K562 (cell line): ENCODE measurements at regions of chrX and their contacts with region 1.

Region 1: DNA sequence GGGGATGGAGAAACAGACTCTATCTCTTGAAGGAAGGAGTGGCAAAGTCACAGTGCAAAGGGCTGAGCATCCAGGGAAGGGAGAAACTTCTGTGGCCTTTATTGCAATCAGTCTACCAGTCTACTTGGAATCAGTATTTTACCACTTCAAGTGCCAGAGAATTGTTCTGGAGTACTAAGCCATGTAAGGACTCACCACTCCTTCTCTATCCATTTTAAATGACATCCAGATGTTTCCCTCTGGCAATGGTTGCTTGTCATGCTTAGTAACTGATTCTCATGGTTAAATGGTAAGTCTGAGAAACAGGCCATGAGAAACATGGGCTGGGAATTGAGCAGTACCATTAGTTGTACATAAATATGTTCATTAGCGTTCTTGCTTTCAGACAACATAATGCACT is 21.1 kb upstream of the SMIM10 start:
- DNase-seq: no peak
- ATAC-seq: no peak
- H3K4me3 ChIP-seq: no peak overlapping the region
- H3K27ac ChIP-seq: no peak overlapping the region
- H3K4me1 ChIP-seq: peaks cover 0 to 9% of the 10 kb centered on the region in 2 experiments; a peak in 3 of 5 replicates
- H3K27me3 ChIP-seq: no peaks in the 10 kb centered on the region
- CTCF ChIP-seq: no peak
- EP300 ChIP-seq: no peak
- POLR2A ChIP-seq: no peak
- RAD21 ChIP-seq: no peak

Region 2: GRCh38 chrX:134898440-134898839 is 71.3 kb before region 1 on chrX:
- CTCF ChIA-PET with region 1: no interaction called
- POLR2A ChIA-PET with region 1: no interaction called
- in situ Hi-C with region 1: no loop called
- intact Hi-C with region 1: no loop called
- DNase-seq: no peak
- ATAC-seq: no peak
- H3K4me3 ChIP-seq: no peak overlapping the region
- H3K27ac ChIP-seq: no peak overlapping the region
- H3K4me1 ChIP-seq: no peaks in the 10 kb centered on the region
- H3K27me3 ChIP-seq: no peaks in the 10 kb centered on the region
- CTCF ChIP-seq: no peak
- EP300 ChIP-seq: no peak
- POLR2A ChIP-seq: no peak
- RAD21 ChIP-seq: no peak

Region 3: GRCh38 chrX:135003876-135004623 is 34.3 kb after region 1 on chrX:
- CTCF ChIA-PET with region 1: interaction called, 10 read pairs
- POLR2A ChIA-PET with region 1: no interaction called
- in situ Hi-C with region 1: no loop called
- intact Hi-C with region 1: loop called (anchors 1 kb)
- DNase-seq: peak; percentile 92 to 98 (median 96)
- ATAC-seq: peak; percentile 99
- H3K4me3 ChIP-seq: peak overlapping the region; percentile 34
- H3K27ac ChIP-seq: no peak overlapping the region
- H3K4me1 ChIP-seq: peaks cover 5 to 7% of the 10 kb centered on the region in 2 experiments; a peak in 3 of 5 replicates
- H3K27me3 ChIP-seq: no peaks in the 10 kb centered on the region; a peak in 2 of 5 replicates
- CTCF ChIP-seq: no peak
- EP300 ChIP-seq: no peak
- POLR2A ChIP-seq: 0 out of 2 replicates have a peak, but pooled peaks have one; percentile 38
- RAD21 ChIP-seq: no peak

Region 4: GRCh38 chrX:135086197-135086854 is 116.6 kb after region 1 on chrX:
- CTCF ChIA-PET with region 1: interaction called, 3 read pairs
- POLR2A ChIA-PET with region 1: no interaction called
- in situ Hi-C with region 1: no loop called
- intact Hi-C with region 1: loop called (anchors 1 kb)
- DNase-seq: peak; percentile 43 to 77 (median 48)
- ATAC-seq: peak; percentile 97
- H3K4me3 ChIP-seq: no peak overlapping the region
- H3K27ac ChIP-seq: no peak overlapping the region
- H3K4me1 ChIP-seq: no peaks in the 10 kb centered on the region
- H3K27me3 ChIP-seq: no peaks in the 10 kb centered on the region
- CTCF ChIP-seq: peak; percentile 67 to 80 (median 74)
- EP300 ChIP-seq: no peak
- POLR2A ChIP-seq: no peak
- RAD21 ChIP-seq: peak; percentile 38 to 62

Region 5: DNA sequence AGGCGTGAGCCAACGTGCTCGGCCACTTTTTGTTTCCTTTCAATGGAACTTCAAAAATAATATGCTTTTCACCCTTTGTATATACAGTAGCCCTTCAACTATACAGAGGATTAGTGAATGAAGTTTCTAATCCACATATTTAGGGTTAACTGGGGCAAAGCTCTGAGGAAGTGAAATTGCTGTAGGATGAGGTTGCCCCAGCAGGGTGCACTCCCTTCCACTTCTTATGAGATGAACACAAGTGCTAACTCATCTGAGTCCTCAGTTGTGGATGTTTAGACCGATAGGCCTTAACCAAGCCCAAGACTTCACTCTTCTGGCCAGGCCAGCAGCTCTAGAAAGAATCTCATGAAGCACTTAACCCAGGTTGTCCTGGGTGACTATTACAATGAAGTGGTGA is 230.6 kb after region 1 on chrX:
- CTCF ChIA-PET with region 1: interaction called, 3 read pairs
- POLR2A ChIA-PET with region 1: no interaction called
- in situ Hi-C with region 1: loop called (anchors 5 kb)
- intact Hi-C with region 1: no loop called
- DNase-seq: no peak
- ATAC-seq: no peak
- H3K4me3 ChIP-seq: no peak overlapping the region
- H3K27ac ChIP-seq: no peak overlapping the region
- H3K4me1 ChIP-seq: no peaks in the 10 kb centered on the region
- H3K27me3 ChIP-seq: no peaks in the 10 kb centered on the region; a peak in 2 of 5 replicates
- CTCF ChIP-seq: no peak
- EP300 ChIP-seq: no peak
- POLR2A ChIP-seq: no peak
- RAD21 ChIP-seq: no peak